ENCODE measurements at regions of chr14 and their contacts with region 1.

Region 1: GRCh38 chr14:50677527-50678063 is 9.5 kb upstream of the SAV1 start:
- DNase-seq: peak; percentile 75
- H3K4me3 Mint-ChIP-seq: peak overlapping the region; percentile 32
- H3K27ac Mint-ChIP-seq: peak overlapping the region; percentile 73
- H3K4me1 Mint-ChIP-seq: peaks cover 28% of the 10 kb centered on the region
- H3K27me3 Mint-ChIP-seq: no peaks in the 10 kb centered on the region
- CTCF ChIP-seq: no peak

Region 2: GRCh38 chr14:50658203-50658602 is 19.4 kb before region 1 on chr14:
- CTCF ChIA-PET with region 1: no interaction called
- POLR2A ChIA-PET with region 1: interaction called, 14 read pairs
- intact Hi-C with region 1: no loop called
- DNase-seq: peak; percentile 41
- H3K4me3 Mint-ChIP-seq: no peak overlapping the region
- H3K27ac Mint-ChIP-seq: peak overlapping the region; percentile 51
- H3K4me1 Mint-ChIP-seq: peaks cover 35% of the 10 kb centered on the region
- H3K27me3 Mint-ChIP-seq: no peaks in the 10 kb centered on the region
- CTCF ChIP-seq: no peak

Region 3: DNA sequence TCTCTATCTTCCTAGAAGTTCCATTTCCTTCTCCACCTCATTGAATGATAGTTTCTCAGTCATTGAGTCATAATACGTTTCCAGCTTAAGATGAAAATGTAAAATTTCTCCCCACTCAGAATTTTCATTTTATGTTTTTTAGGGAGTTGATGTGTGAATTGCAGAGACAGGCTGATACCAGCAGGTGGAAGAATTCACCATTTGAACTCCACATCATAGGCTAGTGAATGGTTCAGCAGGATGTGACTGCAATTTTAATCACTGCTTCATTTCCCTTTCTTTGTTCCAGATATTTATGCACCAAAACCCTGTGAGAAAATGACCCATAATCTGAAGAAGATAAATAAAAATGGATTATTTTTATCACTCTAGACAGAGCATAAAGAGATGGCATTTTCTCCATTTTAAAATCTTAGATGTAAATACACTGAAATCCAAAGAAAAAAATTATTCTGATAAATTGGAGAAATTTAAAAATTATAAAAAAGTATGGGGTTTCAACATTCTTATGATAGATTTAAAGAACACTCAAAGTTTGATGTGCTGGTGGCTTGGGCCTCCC is 277.3 kb after region 1 on chr14:
- CTCF ChIA-PET with region 1: no interaction called
- POLR2A ChIA-PET with region 1: no interaction called
- intact Hi-C with region 1: no loop called
- DNase-seq: peak; percentile 67
- H3K4me3 Mint-ChIP-seq: peak overlapping the region; percentile 24
- H3K27ac Mint-ChIP-seq: peak overlapping the region; percentile 97
- H3K4me1 Mint-ChIP-seq: peaks cover 24% of the 10 kb centered on the region
- H3K27me3 Mint-ChIP-seq: no peaks in the 10 kb centered on the region
- CTCF ChIP-seq: peak; percentile 66

Measured in MCF 10A (cell line).